Left cardiac atrium (tissue), 4 donors: ENCODE measurements at regions of chr7 and their contacts with region 1.

Region 1: GRCh38 chr7:31735991-31736982 is 49.3 kb downstream of the PPP1R17 start:
- DNase-seq: peak; percentile 36
- ATAC-seq: peak; percentile 60 to 68

Region 2: GRCh38 chr7:31134246-31135188 is 601.8 kb before region 1 on chr7:
- intact Hi-C with region 1: loop called (anchors 2 to 5 kb)
- DNase-seq: peak; percentile 77
- ATAC-seq: peak; percentile 95 to 98

Region 3: GRCh38 chr7:31443457-31443856 is 292.8 kb before region 1 on chr7:
- intact Hi-C with region 1: loop called (anchors 10 kb)
- DNase-seq: no peak
- ATAC-seq: peak; percentile 47 to 66

Region 4: DNA sequence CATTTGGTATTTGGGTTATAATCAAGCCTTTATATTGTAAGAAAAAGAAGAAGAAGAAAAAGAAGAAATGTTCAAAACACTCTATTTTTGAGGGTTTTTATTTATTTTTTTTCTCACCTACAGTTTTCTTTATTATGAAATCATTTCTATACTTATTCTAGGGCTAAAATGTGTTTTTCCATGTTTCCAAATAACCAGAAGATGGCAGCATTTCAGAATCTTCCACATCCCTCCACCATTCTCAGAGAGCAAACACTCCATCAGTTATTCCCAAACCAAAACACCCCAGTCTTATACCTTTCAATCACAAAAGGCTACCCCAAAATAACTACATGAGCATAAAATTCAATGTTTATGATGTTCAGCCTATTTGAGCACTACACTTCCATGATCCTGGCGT is 88.0 kb before region 1 on chr7:
- intact Hi-C with region 1: loop called in 1 of 2 experiments (anchors 2 kb)
- DNase-seq: no peak
- ATAC-seq: no peak